ENCODE measurements at regions of chr5 and their contacts with region 1.

Region 1: GRCh38 chr5:148740966-148741742 is 85.3 kb upstream of the ADRB2 start:
- DNase-seq: peak; percentile 96
- ATAC-seq: peak; percentile 92
- H3K4me3 ChIP-seq: peak overlapping the region; percentile 4; the same call in 1 of the 2 replicates
- H3K27ac ChIP-seq: no peak overlapping the region
- H3K4me1 ChIP-seq: peaks cover 5% of the 10 kb centered on the region
- H3K27me3 ChIP-seq: no peaks in the 10 kb centered on the region
- CTCF ChIP-seq: peak; percentile 99

Region 2: DNA sequence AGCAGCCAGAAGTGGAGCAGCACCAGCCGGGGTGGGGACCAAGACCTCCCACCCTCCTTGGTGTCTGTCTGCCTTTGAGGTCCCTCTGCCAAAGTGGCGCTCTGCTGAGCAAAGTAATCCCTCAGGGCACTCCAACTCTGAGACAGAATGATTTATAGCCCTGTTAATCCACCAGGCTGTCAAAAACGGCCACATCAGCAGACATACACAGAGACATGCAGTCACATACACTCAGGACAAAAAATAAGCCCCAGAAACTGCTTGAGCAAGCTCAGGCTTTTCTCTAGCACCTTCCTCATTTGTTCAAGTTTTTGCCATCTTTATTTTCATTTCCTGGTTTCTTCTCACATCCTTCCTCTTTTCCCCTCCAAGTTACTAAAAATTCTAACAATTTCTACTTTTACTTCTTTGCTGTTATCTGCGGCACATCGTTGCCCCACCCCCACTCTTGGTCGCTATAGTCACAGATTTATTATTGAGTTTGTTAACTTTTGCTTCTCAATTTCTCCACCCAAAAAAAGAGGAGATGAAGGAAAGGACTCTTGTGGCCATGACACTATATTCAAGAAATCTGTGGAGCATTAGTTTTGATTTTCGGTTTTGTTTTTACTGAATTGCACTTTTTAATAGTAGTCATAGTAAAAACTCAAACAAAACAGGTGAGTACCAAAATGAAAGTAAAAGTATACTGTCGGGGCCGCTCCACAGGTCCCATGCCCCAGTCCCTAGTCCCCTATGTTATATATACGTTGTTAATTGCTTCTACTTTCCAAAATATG is 67.9 kb after region 1 on chr5:
- CTCF ChIA-PET with region 1: interaction called, 4 read pairs
- POLR2A ChIA-PET with region 1: no interaction called
- intact Hi-C with region 1: loop called (anchors 1 kb)
- DNase-seq: peak; percentile 74
- ATAC-seq: peak; percentile 54
- H3K4me3 ChIP-seq: peak overlapping the region; percentile 74
- H3K27ac ChIP-seq: no peak overlapping the region
- H3K4me1 ChIP-seq: peaks cover 54% of the 10 kb centered on the region
- H3K27me3 ChIP-seq: no peaks in the 10 kb centered on the region
- CTCF ChIP-seq: no peak; the same call in 1 of the 2 replicates

Region 3: GRCh38 chr5:148826053-148826738 is 85.0 kb after region 1 on chr5 and contains the start of gene ADRB2:
- CTCF ChIA-PET with region 1: interaction called, 33 read pairs
- POLR2A ChIA-PET with region 1: interaction called, 21 read pairs
- intact Hi-C with region 1: loop called (anchors 1 kb)
- DNase-seq: peak; percentile 100
- ATAC-seq: peak; percentile 83
- H3K4me3 ChIP-seq: peak within 1 kb of the TSS; percentile 73
- H3K27ac ChIP-seq: peak within 1 kb of the TSS; percentile 69
- H3K4me1 ChIP-seq: peaks cover 51% of the 10 kb centered on the region
- H3K27me3 ChIP-seq: no peaks in the 10 kb centered on the region
- CTCF ChIP-seq: no peak
- total RNA-seq, gene ADRB2: 41.1 and 42.1 TPM in 2 replicates

Region 4: DNA sequence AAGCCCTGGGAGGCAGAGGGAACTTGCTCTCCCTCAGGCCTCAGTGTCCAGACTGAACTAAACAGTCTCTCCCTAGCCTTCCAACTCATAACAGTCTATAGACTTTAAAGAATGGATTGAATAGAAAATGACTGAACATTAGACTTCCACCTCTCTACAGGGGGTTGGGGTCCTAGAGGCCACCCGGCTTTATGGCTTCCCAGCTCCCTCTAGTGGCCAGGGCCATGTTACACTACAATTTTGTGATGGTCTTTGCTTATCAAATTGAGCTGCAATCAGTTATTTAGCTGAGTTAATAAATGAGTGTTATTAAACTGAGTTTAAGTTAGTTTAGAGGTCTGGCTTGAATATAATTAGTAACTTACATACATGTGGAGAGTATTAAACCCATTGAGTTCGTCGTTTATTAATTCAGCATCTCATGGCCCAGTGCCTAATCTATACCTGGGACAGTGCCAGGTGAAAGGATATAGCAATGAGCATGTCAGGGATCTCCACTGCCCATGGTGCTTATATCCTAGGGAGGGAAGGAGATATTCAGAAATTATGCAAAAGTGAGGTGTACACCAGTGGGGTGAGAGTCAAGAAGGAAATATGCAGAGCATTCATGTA is 216.5 kb after region 1 on chr5:
- CTCF ChIA-PET with region 1: interaction called, 31 read pairs
- POLR2A ChIA-PET with region 1: interaction called, 3 read pairs
- intact Hi-C with region 1: loop called (anchors 1 kb)
- DNase-seq: peak; percentile 86
- ATAC-seq: no peak
- H3K4me3 ChIP-seq: no peak overlapping the region
- H3K27ac ChIP-seq: no peak overlapping the region
- H3K4me1 ChIP-seq: peaks cover 49% of the 10 kb centered on the region
- H3K27me3 ChIP-seq: no peaks in the 10 kb centered on the region
- CTCF ChIP-seq: peak; percentile 100